HepG2 (cell line): ENCODE measurements at regions of chr11 and their contacts with region 1.

Region 1: GRCh38 chr11:131674051-131674755 is 303.8 kb downstream of the NTM start:
- DNase-seq: peak; percentile 21
- ATAC-seq: peak; percentile 89
- H3K4me3 ChIP-seq: no peak overlapping the region
- H3K27ac ChIP-seq: no peak overlapping the region
- H3K4me1 ChIP-seq: no peaks in the 10 kb centered on the region
- H3K27me3 ChIP-seq: peaks cover 0 to 11% of the 10 kb centered on the region in 2 experiments; a peak in 3 of 5 replicates
- CTCF ChIP-seq: peak; percentile 94
- EP300 ChIP-seq: no peak
- POLR2A ChIP-seq: no peak
- RAD21 ChIP-seq: peak; percentile 74

Region 2: GRCh38 chr11:130924770-130925169 is 749.4 kb before region 1 on chr11:
- CTCF ChIA-PET with region 1: interaction called, 18 read pairs
- POLR2A ChIA-PET with region 1: no interaction called
- in situ Hi-C with region 1: loop called (anchors 5 kb)
- intact Hi-C with region 1: no loop called
- DNase-seq: no peak
- ATAC-seq: no peak
- H3K4me3 ChIP-seq: no peak overlapping the region
- H3K27ac ChIP-seq: no peak overlapping the region
- H3K4me1 ChIP-seq: no peaks in the 10 kb centered on the region
- H3K27me3 ChIP-seq: no peaks in the 10 kb centered on the region; a peak in 1 of 5 replicates
- CTCF ChIP-seq: no peak
- EP300 ChIP-seq: no peak
- POLR2A ChIP-seq: no peak
- RAD21 ChIP-seq: no peak

Region 3: DNA sequence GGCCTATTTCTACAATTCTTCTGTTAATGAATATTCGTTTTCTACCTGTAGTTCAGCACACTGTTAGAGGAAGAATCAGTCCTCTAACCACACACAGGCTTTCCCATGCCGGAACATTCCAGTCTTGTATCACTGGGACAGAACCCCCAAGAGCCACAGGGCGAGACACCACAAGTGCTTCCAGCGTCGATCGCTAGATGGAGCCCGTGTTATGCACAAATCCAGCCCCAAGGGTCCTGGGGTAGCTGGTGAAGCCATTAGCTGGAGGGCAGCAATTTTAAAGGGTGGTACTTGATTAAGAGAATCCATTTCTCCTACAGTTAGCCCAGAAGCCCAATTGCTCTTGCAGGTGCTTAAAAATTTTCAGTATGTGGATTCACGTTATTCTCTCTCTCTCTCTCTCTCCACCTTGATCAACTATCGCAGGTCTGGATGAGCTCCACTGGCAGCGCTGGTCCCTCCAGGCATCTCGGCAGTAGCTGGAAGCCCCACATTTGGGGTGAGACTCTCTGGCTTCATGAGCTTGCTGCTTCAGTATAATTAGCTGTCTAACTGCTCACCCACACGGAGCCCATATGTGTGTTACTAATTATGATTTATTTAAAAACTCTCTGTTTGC is 609.7 kb before region 1 on chr11:
- CTCF ChIA-PET with region 1: interaction called, 23 read pairs
- POLR2A ChIA-PET with region 1: no interaction called
- in situ Hi-C with region 1: loop called (anchors 5 kb)
- intact Hi-C with region 1: loop called (anchors 1 kb)
- DNase-seq: peak; percentile 42
- ATAC-seq: peak; percentile 97
- H3K4me3 ChIP-seq: no peak overlapping the region
- H3K27ac ChIP-seq: no peak overlapping the region
- H3K4me1 ChIP-seq: no peaks in the 10 kb centered on the region
- H3K27me3 ChIP-seq: peaks cover 0 to 5% of the 10 kb centered on the region in 2 experiments; a peak in 1 of 5 replicates
- CTCF ChIP-seq: peak; percentile 89
- EP300 ChIP-seq: no peak
- POLR2A ChIP-seq: no peak
- RAD21 ChIP-seq: peak; percentile 73

Region 4: DNA sequence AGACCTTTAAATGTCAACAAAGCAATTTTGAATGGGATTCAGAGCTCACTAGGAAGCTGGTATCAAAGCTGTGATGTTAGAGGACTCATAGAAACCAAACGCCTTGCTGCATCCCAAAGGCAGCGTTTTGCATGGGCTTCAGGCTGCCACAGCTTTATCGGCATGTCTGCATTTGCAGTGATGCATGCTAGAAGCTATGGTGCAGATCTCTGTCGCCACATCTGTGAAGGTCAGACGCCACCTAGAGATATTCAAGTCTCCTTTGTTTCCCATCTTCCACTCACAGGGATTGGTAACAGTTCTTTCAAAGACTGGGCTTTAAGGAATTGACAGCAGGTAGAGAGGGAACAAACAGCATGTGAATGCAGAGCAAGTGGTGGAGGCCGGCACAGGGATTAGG is 256.0 kb before region 1 on chr11:
- CTCF ChIA-PET with region 1: no interaction called
- POLR2A ChIA-PET with region 1: no interaction called
- in situ Hi-C with region 1: loop called (anchors 10 kb)
- intact Hi-C with region 1: no loop called
- DNase-seq: no peak
- ATAC-seq: no peak
- H3K4me3 ChIP-seq: no peak overlapping the region
- H3K27ac ChIP-seq: no peak overlapping the region
- H3K4me1 ChIP-seq: no peaks in the 10 kb centered on the region
- H3K27me3 ChIP-seq: no peaks in the 10 kb centered on the region
- CTCF ChIP-seq: no peak
- EP300 ChIP-seq: no peak
- POLR2A ChIP-seq: no peak
- RAD21 ChIP-seq: no peak

Region 5: GRCh38 chr11:131688051-131688698 is 14.0 kb after region 1 on chr11:
- CTCF ChIA-PET with region 1: no interaction called
- POLR2A ChIA-PET with region 1: no interaction called
- in situ Hi-C with region 1: no loop called
- intact Hi-C with region 1: no loop called
- DNase-seq: peak; percentile 9
- ATAC-seq: peak; percentile 85
- H3K4me3 ChIP-seq: no peak overlapping the region
- H3K27ac ChIP-seq: no peak overlapping the region
- H3K4me1 ChIP-seq: no peaks in the 10 kb centered on the region
- H3K27me3 ChIP-seq: peaks cover 3 to 48% of the 10 kb centered on the region in 2 experiments
- CTCF ChIP-seq: peak; percentile 70
- EP300 ChIP-seq: no peak
- POLR2A ChIP-seq: no peak
- RAD21 ChIP-seq: 0 out of 2 replicates have a peak, but pooled peaks have one; percentile 41